ENCODE measurements at regions of chr3 and their contacts with region 1.

Region 1: GRCh38 chr3:142279965-142280590 is 54.7 kb upstream of the GK5 start:
- DNase-seq: peak; percentile 53
- ATAC-seq: peak; percentile 100
- H3K4me3 ChIP-seq: no peak overlapping the region
- H3K27ac ChIP-seq: no peak overlapping the region
- H3K4me1 ChIP-seq: no peaks in the 10 kb centered on the region; the same call in 1 of the 2 replicates
- H3K27me3 ChIP-seq: no peaks in the 10 kb centered on the region
- CTCF ChIP-seq: peak; percentile 53 to 91 (median 67); a peak in 4 of 6 replicates
- EP300 ChIP-seq: no peak
- POLR2A ChIP-seq: no peak
- RAD21 ChIP-seq: peak; percentile 93

Region 2: DNA sequence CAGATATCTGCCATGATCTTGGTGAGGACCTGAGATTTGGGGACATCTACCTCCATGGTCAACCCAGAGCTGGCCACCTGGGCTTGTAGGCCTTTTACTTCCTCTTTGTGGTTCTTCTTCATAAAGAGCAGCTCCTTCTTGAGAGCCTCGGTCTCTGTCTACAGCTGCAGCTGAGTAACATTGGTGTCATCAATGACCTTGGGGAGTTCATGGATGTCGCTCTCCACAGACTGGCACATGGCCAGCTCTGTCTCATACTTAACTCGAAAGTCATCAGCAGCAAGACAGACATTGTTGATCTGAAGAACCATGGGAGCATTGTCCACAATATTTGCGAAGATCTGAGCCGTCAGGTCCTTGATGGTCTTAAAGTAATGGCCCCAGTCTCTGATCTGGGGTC is 808.9 kb before region 1 on chr3:
- CTCF ChIA-PET with region 1: no interaction called
- POLR2A ChIA-PET with region 1: no interaction called
- RAD21 ChIA-PET with region 1: no interaction called
- SMC1A ChIA-PET with region 1: interaction called, 3 read pairs
- in situ Hi-C with region 1: no loop called
- intact Hi-C with region 1: loop called (anchors 5 kb)
- DNase-seq: no peak
- ATAC-seq: no peak
- H3K4me3 ChIP-seq: no peak overlapping the region
- H3K27ac ChIP-seq: no peak overlapping the region
- H3K4me1 ChIP-seq: no peaks in the 10 kb centered on the region
- H3K27me3 ChIP-seq: no peaks in the 10 kb centered on the region
- CTCF ChIP-seq: no peak
- EP300 ChIP-seq: no peak
- POLR2A ChIP-seq: no peak
- RAD21 ChIP-seq: no peak

Region 3: DNA sequence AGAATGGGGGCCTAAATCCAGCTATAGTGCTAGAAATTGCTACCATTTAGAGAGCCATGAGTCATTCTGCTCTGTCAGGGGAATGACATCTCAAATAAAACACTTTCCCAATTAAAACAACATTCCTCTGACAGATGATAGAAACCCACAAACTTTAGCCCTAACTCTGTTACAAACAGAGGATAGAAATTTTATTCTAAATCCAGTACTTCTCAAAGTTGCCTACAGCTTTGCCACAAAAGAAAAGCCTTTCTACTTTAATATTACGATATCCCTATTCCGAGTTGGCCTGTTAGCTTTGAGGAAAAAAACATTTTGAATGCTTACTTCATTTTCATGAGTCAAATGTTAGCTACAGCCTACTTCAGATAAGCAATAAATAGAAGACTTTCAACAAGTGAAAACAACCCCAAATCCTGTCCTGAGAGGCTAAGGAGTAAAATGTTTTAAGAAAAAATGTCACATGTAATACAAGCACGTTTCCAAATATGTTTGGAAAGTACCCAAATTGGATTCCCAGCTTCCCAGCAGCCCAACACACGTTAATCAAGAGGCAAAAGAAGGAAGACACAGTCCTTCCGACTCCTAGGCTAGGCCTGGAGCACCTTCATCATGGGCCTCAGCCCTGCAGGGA is 320.0 kb before region 1 on chr3:
- CTCF ChIA-PET with region 1: interaction called, 8 read pairs
- POLR2A ChIA-PET with region 1: no interaction called
- RAD21 ChIA-PET with region 1: interaction called, 5 read pairs
- SMC1A ChIA-PET with region 1: interaction called, 4 read pairs
- in situ Hi-C with region 1: loop called (anchors 5 kb)
- intact Hi-C with region 1: loop called (anchors 1 kb)
- DNase-seq: no peak
- ATAC-seq: no peak
- H3K4me3 ChIP-seq: no peak overlapping the region
- H3K27ac ChIP-seq: no peak overlapping the region
- H3K4me1 ChIP-seq: no peaks in the 10 kb centered on the region
- H3K27me3 ChIP-seq: no peaks in the 10 kb centered on the region
- CTCF ChIP-seq: no peak
- EP300 ChIP-seq: no peak
- POLR2A ChIP-seq: no peak
- RAD21 ChIP-seq: no peak

Region 4: GRCh38 chr3:142124243-142124642 is 155.8 kb before region 1 on chr3:
- CTCF ChIA-PET with region 1: interaction called, 43 read pairs
- POLR2A ChIA-PET with region 1: no interaction called
- RAD21 ChIA-PET with region 1: interaction called, 12 read pairs
- SMC1A ChIA-PET with region 1: interaction called, 16 read pairs
- in situ Hi-C with region 1: no loop called
- intact Hi-C with region 1: loop called (anchors 1 kb)
- DNase-seq: no peak
- ATAC-seq: no peak
- H3K4me3 ChIP-seq: no peak overlapping the region
- H3K27ac ChIP-seq: no peak overlapping the region
- H3K4me1 ChIP-seq: no peaks in the 10 kb centered on the region
- H3K27me3 ChIP-seq: no peaks in the 10 kb centered on the region
- CTCF ChIP-seq: no peak
- EP300 ChIP-seq: no peak
- POLR2A ChIP-seq: no peak
- RAD21 ChIP-seq: no peak

Region 5: GRCh38 chr3:142180761-142181362 is 99.2 kb before region 1 on chr3:
- CTCF ChIA-PET with region 1: interaction called, 17 read pairs
- POLR2A ChIA-PET with region 1: no interaction called
- RAD21 ChIA-PET with region 1: interaction called, 5 read pairs
- SMC1A ChIA-PET with region 1: interaction called, 18 read pairs
- in situ Hi-C with region 1: no loop called
- intact Hi-C with region 1: loop called (anchors 2 kb)
- DNase-seq: no peak
- ATAC-seq: peak; percentile 75
- H3K4me3 ChIP-seq: no peak overlapping the region
- H3K27ac ChIP-seq: no peak overlapping the region
- H3K4me1 ChIP-seq: no peaks in the 10 kb centered on the region
- H3K27me3 ChIP-seq: no peaks in the 10 kb centered on the region
- CTCF ChIP-seq: peak; percentile 40 to 60 (median 57)
- EP300 ChIP-seq: no peak
- POLR2A ChIP-seq: no peak
- RAD21 ChIP-seq: peak; percentile 46

Region 6: DNA sequence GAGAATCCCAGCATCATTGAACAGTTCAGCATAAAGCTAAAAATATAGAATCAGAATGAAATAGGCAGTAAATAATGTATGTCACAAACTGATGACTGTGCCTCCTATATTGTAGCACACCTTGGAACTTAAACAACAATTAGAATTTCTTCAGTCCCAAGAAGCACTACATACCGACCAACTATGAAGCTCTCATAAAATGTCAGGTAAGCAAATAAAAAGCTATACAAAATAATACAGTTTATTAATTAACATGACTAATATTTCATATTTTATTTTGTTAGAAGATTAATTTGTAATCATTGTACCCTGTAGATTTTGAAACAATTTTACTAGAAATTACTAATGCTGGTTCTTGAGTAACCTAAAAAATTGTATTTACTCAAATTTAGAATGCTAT is 30.4 kb after region 1 on chr3:
- CTCF ChIA-PET with region 1: no interaction called
- POLR2A ChIA-PET with region 1: no interaction called
- RAD21 ChIA-PET with region 1: no interaction called
- SMC1A ChIA-PET with region 1: no interaction called
- in situ Hi-C with region 1: no loop called
- intact Hi-C with region 1: no loop called
- DNase-seq: no peak
- ATAC-seq: no peak
- H3K4me3 ChIP-seq: no peak overlapping the region
- H3K27ac ChIP-seq: no peak overlapping the region
- H3K4me1 ChIP-seq: no peaks in the 10 kb centered on the region
- H3K27me3 ChIP-seq: no peaks in the 10 kb centered on the region
- CTCF ChIP-seq: no peak
- EP300 ChIP-seq: no peak
- POLR2A ChIP-seq: no peak
- RAD21 ChIP-seq: no peak

Region 7: DNA sequence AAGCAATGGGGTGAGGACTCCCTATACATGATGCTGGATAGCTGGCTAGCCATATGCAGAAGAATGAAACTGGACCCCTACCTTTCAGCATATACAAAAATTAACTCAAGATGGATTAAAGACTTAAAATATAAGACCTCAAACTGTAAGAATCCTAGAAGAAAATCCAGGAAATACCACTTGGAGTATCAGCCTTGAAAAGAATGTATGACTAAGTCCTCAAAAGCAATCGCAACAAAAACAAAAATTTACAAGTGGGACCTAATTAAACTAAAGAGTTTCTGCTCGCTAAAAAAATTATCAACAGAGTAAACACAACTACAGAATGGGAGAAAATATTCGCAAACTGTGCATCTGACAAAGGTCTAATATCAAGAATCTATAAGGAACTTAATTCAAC is 73.5 kb after region 1 on chr3:
- CTCF ChIA-PET with region 1: no interaction called
- POLR2A ChIA-PET with region 1: no interaction called
- RAD21 ChIA-PET with region 1: no interaction called
- SMC1A ChIA-PET with region 1: no interaction called
- in situ Hi-C with region 1: no loop called
- intact Hi-C with region 1: no loop called
- DNase-seq: no peak
- ATAC-seq: no peak
- H3K4me3 ChIP-seq: no peak overlapping the region
- H3K27ac ChIP-seq: no peak overlapping the region
- H3K4me1 ChIP-seq: peaks cover 16% of the 10 kb centered on the region; the same call in 1 of the 2 replicates
- H3K27me3 ChIP-seq: no peaks in the 10 kb centered on the region
- CTCF ChIP-seq: no peak
- EP300 ChIP-seq: no peak
- POLR2A ChIP-seq: no peak
- RAD21 ChIP-seq: no peak

Region 8: DNA sequence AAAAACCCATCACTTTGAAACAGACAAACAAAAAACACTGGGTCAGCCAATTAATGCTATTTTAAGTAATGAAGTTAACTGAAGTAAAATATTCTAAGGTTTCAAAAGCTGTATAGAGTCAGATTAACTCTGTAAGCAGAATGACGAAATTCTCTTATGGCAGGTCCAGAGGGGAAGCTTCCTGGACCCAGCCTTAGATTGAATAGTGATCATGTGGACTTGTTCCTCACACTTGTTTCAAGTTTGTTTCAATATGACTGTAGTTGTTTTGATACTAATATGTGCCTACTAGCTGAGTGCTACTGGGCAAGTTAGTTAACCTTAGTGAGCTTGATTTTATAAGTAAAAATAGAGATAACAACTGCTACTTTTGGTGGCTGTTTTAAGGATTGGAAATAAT is 348.7 kb after region 1 on chr3:
- CTCF ChIA-PET with region 1: no interaction called
- POLR2A ChIA-PET with region 1: no interaction called
- RAD21 ChIA-PET with region 1: no interaction called
- SMC1A ChIA-PET with region 1: no interaction called
- in situ Hi-C with region 1: no loop called
- intact Hi-C with region 1: no loop called
- DNase-seq: peak; percentile 15
- ATAC-seq: peak; percentile 93
- H3K4me3 ChIP-seq: no peak overlapping the region
- H3K27ac ChIP-seq: no peak overlapping the region
- H3K4me1 ChIP-seq: no peaks in the 10 kb centered on the region
- H3K27me3 ChIP-seq: no peaks in the 10 kb centered on the region
- CTCF ChIP-seq: no peak
- EP300 ChIP-seq: no peak; a peak in 1 of 4 replicates
- POLR2A ChIP-seq: no peak
- RAD21 ChIP-seq: no peak

Measured in GM12878 (cell line).